ENCODE measurements at regions of chr2 and their contacts with region 1.

Region 1: DNA sequence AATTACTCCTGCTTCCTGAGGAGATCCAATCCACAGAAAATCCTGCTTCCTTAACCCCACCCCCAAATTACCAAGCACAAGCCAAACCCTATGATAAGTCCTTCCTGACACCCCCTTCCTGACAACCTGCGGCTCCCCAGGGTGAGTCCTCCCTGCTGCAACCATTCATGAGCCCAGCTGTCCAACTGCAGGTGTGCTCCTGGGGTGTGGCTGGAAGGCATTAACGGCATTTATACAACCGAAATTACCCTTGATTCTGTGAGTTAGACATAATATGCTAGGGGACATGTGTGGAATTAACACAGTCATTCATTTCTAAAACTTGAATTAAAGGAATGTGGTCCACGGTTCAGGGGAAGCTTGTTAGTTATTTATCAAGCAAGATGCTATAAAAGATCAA is 119.0 kb upstream of the ALKAL2 start:
- DNase-seq: no peak
- H3K4me3 ChIP-seq: no peak overlapping the region
- CTCF ChIP-seq: no peak

Region 2: DNA sequence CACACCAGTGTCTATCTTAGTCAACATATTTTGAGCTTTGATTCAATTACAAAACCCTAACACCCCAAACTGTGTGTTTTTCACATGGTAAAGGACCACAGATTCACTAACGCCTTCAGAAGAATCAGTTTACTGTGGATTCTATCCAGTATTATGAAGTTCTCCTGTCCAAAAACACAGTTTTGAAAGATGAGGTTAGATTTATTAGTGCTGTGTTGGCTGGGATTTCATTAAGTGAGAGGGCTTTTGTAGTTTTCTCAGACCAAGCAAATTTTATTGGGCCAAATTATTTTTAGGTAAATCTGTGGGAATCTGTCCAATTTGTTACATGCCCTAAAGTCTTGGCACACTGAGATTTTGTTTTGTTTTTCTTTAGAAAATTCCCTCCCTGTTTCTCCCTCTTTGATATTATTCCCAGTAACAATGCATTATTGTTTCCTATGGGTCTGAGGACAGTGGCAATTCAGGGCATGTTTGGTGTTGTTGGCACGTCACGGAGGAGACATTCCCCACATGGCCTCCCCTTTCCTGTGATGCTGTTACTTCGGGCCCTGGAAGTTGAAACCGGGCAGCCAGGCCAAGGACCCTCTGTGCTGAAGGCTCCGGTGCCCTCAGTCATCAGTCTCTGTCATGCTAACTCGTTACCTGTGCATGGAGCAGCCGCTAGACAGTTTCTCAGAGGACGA is 31.5 kb before region 1 on chr2:
- in situ Hi-C with region 1: loop called (anchors 5 kb)
- DNase-seq: no peak
- H3K4me3 ChIP-seq: no peak overlapping the region
- CTCF ChIP-seq: no peak

Region 3: DNA sequence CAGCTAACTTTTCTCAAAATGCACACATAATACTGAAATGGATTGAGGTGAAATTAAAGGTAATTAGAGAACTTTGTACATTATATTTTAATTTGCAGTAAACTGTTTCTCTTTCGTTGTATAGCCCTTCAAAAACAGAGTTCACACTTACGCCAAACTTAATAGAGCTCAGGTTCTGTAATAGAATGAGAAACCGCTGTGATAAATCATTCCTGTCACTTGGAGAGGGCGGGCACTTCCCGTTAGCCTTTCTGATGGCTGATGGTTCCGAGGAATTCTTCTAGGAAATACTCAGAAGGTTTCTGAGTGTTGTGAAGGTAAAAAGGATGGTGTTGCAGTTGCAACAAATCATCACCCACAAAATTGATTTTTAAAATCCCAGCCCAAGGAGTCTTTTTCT is 36.9 kb after region 1 on chr2:
- in situ Hi-C with region 1: no loop called
- DNase-seq: no peak
- H3K4me3 ChIP-seq: no peak overlapping the region
- CTCF ChIP-seq: no peak

Region 4: GRCh38 chr2:455015-455705 is 48.3 kb after region 1 on chr2:
- in situ Hi-C with region 1: no loop called
- DNase-seq: no peak
- H3K4me3 ChIP-seq: no peak overlapping the region
- CTCF ChIP-seq: no peak

Region 5: DNA sequence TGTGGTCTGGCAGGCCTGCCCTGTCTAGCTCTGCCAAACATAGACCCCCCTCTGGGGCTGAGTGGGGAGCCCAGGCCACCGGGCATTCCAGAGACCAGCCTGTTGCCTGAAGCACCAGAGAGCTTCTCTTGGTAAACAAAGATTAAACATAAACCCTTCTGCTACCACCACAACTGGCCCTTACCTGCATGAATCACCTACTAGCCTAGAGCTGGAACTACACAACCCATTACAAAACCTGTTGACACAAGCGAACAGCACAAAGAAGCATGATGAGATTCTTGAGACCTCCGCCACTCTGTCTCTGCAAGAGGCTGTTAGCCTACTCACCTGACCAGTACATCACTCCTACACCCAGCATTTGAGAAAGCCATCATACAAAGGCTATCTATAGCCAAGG is 590.8 kb after region 1 on chr2:
- in situ Hi-C with region 1: no loop called
- DNase-seq: no peak
- H3K4me3 ChIP-seq: no peak overlapping the region
- CTCF ChIP-seq: no peak

Measured in astrocyte of the cerebellum (primary cell).